ENCODE measurements at regions of chr2 and their contacts with region 1.

Region 1: DNA sequence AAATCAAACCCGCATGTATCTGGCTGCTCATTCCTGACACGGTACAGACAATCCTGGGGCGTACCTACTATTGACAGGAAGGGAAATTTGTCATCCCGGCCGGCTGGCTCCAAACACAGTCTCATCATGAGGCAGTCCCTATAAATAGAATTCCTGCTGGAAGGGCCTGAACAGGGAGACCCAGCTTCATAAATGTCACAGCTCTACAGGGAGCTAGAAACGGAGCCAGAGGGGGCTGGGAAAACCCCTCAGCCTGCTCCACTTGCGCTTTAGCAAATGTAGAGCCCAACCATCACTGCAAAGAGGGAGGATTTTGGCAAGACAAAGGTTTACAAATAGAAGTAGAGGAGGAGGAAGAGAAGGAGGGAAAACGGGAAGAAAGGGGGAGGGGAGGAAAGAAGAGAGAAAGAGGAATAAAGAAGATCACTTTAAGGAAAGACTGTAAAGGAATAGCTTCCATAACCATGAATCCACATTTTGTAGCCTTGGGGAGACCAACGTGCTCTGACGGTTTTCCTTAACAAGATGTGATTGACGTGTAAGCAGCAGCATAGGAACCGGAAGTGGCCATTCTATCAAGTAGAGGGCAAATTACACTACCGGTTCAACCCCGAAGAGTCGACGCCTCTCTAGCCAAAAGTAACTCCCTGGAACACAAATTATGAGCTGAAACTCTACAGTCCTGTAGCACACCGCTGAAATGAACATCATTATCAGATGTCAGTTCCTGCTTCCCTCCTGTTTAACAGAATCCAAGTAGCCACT is 56.8 kb upstream of the TTN start:
- DNase-seq: peak; percentile 78 to 87 (median 85)
- ATAC-seq: peak; percentile 89 to 94
- H3K4me3 ChIP-seq: peak overlapping the region; percentile 5
- H3K27ac ChIP-seq: peak overlapping the region; percentile 100
- H3K4me1 ChIP-seq: peaks cover 8% of the 10 kb centered on the region
- H3K27me3 ChIP-seq: no peaks in the 10 kb centered on the region

Region 2: DNA sequence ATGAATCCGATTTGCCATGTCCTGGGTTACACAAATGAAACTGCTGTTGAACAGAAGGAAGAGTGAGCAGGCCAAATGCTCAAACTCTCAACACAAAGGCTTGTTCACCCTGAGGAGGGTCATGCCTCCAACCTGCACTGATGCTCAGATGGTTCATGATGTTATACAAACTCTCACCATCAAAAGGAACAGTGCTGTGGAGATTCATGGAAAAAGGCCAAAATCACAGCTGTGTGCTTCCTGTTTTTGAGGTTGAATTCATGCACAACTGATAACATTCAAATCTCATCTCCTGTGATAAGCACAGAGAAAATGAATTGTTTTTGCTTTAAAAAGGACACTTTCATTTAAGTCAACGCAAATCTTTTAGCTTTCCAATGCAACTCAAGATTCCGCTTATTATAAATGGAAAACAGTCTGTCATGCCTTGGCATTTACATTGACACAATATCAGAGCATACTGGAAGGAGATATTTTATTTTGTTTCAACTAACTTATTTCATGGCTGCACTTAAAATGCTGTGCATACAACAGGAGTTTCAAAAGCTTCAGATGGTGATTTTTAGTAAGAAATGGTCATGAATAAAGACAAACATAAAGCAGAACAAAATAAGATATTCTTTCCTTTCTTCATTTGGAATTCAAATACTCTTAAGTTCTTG is 34.6 kb before region 1 on chr2:
- intact Hi-C with region 1: loop called in 1 of 4 experiments (anchors 5 kb)
- DNase-seq: no peak
- ATAC-seq: peak; percentile 52 to 73
- H3K4me3 ChIP-seq: no peak overlapping the region
- H3K27ac ChIP-seq: no peak overlapping the region
- H3K4me1 ChIP-seq: peaks cover 7% of the 10 kb centered on the region
- H3K27me3 ChIP-seq: no peaks in the 10 kb centered on the region